ENCODE measurements at regions of chr1 and their contacts with region 1.

Region 1: DNA sequence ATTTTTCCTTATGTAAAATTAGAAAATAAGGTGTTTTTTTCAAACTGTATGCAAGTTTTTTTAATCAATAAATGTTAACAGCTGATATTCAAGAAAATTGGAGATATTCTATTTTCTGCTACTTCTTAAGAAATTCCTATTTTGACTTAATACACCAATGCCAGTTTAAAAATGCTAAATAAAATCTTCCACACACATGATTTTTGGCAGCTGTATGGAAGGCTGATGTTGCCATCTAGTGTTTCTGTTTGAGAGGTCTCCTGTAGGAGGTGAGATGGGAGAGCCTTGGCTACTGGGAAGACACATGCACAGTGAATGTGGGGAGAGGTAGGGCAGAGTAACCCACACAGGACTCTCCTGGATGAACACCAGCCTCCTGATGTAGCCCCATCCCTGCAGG is 29.2 kb upstream of the OR2B11 start:
- DNase-seq: peak in 1 of 10 donors; percentile 18
- H3K4me3 ChIP-seq: no peak overlapping the region
- H3K27ac ChIP-seq: no peak overlapping the region
- H3K27me3 ChIP-seq: peaks cover 0 to 12% (median 0%) of the 10 kb centered on the region in 45 donors
- CTCF ChIP-seq: peak in 54 of 56 donors; percentile 46 to 80 (median 61)

Region 2: GRCh38 chr1:247043406-247043805 is 443.7 kb before region 1 on chr1:
- intact Hi-C with region 1: loop called in 1 of 2 experiments (anchors 5 kb)
- DNase-seq: no peak
- H3K4me3 ChIP-seq: no peak overlapping the region
- H3K27ac ChIP-seq: no peak overlapping the region
- H3K27me3 ChIP-seq: no peaks in the 10 kb centered on the region
- CTCF ChIP-seq: peak in 49 of 56 donors; percentile 11 to 71 (median 39)

Region 3: DNA sequence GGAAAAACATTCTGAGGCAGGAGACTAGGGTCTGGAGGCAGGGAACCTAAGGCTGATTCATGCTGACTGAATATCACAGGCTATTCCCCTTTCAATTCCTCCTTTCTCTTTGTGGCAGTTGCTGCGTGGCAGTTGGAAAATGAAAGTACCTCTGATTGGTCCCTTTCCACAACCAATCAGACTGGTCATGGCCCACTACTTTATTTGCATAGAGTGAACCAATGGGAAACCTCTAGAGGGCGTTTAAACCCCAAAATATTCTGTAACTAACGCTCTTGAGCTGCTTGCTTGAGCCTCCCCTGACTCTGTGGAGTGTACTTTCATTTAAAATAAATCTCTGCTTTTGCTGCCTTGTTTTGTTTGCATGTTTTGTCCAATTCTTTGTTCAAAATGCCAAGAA is 258.9 kb before region 1 on chr1:
- intact Hi-C with region 1: no loop called
- DNase-seq: no peak
- H3K4me3 ChIP-seq: no peak overlapping the region
- H3K27ac ChIP-seq: no peak overlapping the region
- H3K27me3 ChIP-seq: peaks cover 0 to 3% (median 0%) of the 10 kb centered on the region in 45 donors
- CTCF ChIP-seq: peak in 2 of 56 donors; percentile 13 to 15

Region 4: GRCh38 chr1:247386687-247387086 is 100.4 kb before region 1 on chr1:
- intact Hi-C with region 1: loop called in 1 of 2 experiments (anchors 5 kb)
- DNase-seq: no peak
- H3K4me3 ChIP-seq: no peak overlapping the region
- H3K27ac ChIP-seq: peak overlapping the region in 22 of 59 donors; percentile 7 to 86 (median 50)
- H3K27me3 ChIP-seq: no peaks in the 10 kb centered on the region
- CTCF ChIP-seq: no peak

Measured in dorsolateral prefrontal cortex (tissue), 120 donors.